MCF 10A (cell line): ENCODE measurements at regions of chr7 and their contacts with region 1.

Region 1: DNA sequence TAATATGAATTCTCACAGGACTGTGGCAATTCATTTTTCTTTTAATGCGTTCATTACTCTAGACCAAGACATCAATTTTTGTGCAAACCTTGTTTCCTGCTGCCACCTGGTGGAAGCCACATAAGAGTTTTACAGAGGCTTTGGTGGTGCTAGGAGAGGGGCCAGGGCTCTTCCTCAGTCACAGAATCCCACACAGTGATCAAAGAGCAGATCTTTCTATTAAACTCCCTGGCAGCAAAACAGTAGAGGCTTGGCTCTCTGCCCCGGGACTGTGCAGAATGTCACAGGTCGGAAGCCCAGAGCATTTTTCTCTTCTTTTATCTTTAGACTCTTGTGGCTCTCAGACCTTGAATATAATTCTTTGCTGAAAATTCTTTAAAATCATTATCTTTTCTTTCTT is 506.4 kb upstream of the C7orf33 start:
- DNase-seq: peak; percentile 63
- H3K4me3 Mint-ChIP-seq: no peak overlapping the region
- H3K27ac Mint-ChIP-seq: no peak overlapping the region
- H3K4me1 Mint-ChIP-seq: no peaks in the 10 kb centered on the region
- H3K27me3 Mint-ChIP-seq: peaks cover 81% of the 10 kb centered on the region
- CTCF ChIP-seq: peak; percentile 68

Region 2: GRCh38 chr7:146115851-146116520 is 1968.2 kb before region 1 on chr7:
- CTCF ChIA-PET with region 1: no interaction called
- POLR2A ChIA-PET with region 1: no interaction called
- intact Hi-C with region 1: loop called (anchors 10 kb)
- DNase-seq: no peak
- H3K4me3 Mint-ChIP-seq: no peak overlapping the region
- H3K27ac Mint-ChIP-seq: no peak overlapping the region
- H3K4me1 Mint-ChIP-seq: no peaks in the 10 kb centered on the region
- H3K27me3 Mint-ChIP-seq: peaks cover 42% of the 10 kb centered on the region
- CTCF ChIP-seq: no peak

Region 3: DNA sequence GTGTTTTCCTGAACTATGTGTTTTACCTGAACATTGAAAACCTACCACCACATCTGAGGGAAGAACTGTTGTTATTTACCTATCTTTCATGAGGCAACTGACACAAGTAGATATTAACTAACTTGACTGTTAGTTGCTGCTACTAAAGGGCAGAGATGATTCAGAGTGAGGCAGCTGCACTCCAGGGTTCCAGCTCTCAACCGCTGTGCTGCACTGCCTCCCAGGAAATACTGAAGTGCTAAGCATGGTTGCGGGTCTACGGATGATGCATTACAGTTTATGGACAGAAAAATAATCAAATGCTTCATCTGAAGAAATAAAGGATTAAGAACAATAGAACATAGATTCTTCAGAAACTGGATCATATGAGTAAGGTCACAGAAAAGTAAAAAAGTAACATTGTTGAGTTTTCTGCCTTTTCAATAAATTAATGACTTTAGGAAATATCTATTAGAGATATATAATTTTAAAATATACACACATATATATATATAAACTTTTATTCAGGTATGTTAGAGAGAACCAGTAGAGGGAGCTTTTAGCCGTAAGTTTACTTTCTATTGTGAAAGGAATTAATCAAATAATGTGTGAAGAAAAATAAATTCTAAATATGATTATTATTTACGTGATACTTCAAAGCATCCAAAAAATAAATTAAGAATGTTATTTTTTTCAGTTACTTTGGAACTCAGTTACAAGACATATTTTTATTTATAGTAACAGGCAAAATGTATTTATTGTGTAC is 1347.5 kb before region 1 on chr7:
- CTCF ChIA-PET with region 1: interaction called, 3 read pairs
- POLR2A ChIA-PET with region 1: no interaction called
- intact Hi-C with region 1: loop called (anchors 1 kb)
- DNase-seq: peak; percentile 22
- H3K4me3 Mint-ChIP-seq: no peak overlapping the region
- H3K27ac Mint-ChIP-seq: no peak overlapping the region
- H3K4me1 Mint-ChIP-seq: no peaks in the 10 kb centered on the region
- H3K27me3 Mint-ChIP-seq: peaks cover 45% of the 10 kb centered on the region
- CTCF ChIP-seq: peak; percentile 27

Region 4: DNA sequence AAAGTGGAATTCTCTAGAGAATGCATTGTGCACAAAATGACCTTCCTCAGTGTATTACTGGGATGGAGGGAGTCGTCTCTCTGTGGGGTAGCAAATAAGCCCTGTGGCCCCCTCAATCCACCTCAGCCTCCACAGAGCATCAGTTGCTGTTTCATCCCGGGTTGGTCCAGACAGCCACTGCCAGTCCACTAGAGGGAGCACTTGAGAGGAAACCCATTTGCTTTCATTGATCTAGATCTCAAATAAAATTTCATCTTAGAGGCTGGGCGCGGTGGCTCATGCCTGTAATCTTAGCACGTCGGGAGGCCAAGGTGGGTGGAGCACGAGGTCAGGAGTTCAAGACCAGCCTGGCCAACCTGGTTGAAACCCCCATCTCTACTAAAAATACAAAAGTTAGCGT is 838.8 kb before region 1 on chr7:
- CTCF ChIA-PET with region 1: interaction called, 5 read pairs
- POLR2A ChIA-PET with region 1: no interaction called
- intact Hi-C with region 1: loop called (anchors 1 kb)
- DNase-seq: peak; percentile 62
- H3K4me3 Mint-ChIP-seq: no peak overlapping the region
- H3K27ac Mint-ChIP-seq: no peak overlapping the region
- H3K4me1 Mint-ChIP-seq: no peaks in the 10 kb centered on the region
- H3K27me3 Mint-ChIP-seq: peaks cover 58% of the 10 kb centered on the region
- CTCF ChIP-seq: peak; percentile 70

Region 5: GRCh38 chr7:147432079-147432478 is 652.1 kb before region 1 on chr7:
- CTCF ChIA-PET with region 1: no interaction called
- POLR2A ChIA-PET with region 1: no interaction called
- intact Hi-C with region 1: loop called (anchors 10 kb)
- DNase-seq: peak; percentile 14
- H3K4me3 Mint-ChIP-seq: no peak overlapping the region
- H3K27ac Mint-ChIP-seq: no peak overlapping the region
- H3K4me1 Mint-ChIP-seq: no peaks in the 10 kb centered on the region
- H3K27me3 Mint-ChIP-seq: no peaks in the 10 kb centered on the region
- CTCF ChIP-seq: no peak

Region 6: GRCh38 chr7:147547249-147547897 is 536.8 kb before region 1 on chr7:
- CTCF ChIA-PET with region 1: interaction called, 6 read pairs
- POLR2A ChIA-PET with region 1: no interaction called
- intact Hi-C with region 1: loop called (anchors 2 kb)
- DNase-seq: peak; percentile 49
- H3K4me3 Mint-ChIP-seq: no peak overlapping the region
- H3K27ac Mint-ChIP-seq: no peak overlapping the region
- H3K4me1 Mint-ChIP-seq: no peaks in the 10 kb centered on the region
- H3K27me3 Mint-ChIP-seq: peaks cover 5% of the 10 kb centered on the region
- CTCF ChIP-seq: peak; percentile 25

Region 7: DNA sequence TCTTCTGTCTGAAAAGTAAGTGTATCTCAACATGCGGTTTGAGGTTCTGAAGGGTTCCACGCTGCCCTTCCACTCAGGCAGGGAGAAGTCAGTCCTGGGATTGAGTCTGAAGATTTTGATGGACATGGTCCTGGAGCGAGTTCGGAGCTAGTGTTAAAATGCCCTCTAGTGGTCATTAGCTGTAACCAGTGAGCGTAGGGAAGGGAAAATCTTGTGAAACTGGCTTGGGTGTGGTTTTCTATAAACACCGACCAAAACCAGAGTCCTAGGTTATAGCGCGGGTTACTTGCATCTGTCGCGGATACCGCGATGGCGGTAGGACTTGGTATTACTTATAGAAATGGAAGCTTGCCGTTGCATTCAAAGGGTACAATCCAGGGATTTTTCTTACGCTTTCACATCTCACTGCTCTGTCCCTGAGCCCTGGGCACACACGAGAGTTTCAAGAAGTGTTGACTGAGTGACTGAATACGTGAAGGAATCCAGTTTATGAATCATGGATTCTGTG is 158.2 kb after region 1 on chr7:
- CTCF ChIA-PET with region 1: interaction called, 4 read pairs
- POLR2A ChIA-PET with region 1: no interaction called
- intact Hi-C with region 1: loop called (anchors 2 kb)
- DNase-seq: peak; percentile 76
- H3K4me3 Mint-ChIP-seq: no peak overlapping the region
- H3K27ac Mint-ChIP-seq: no peak overlapping the region
- H3K4me1 Mint-ChIP-seq: no peaks in the 10 kb centered on the region
- H3K27me3 Mint-ChIP-seq: peaks cover 89% of the 10 kb centered on the region
- CTCF ChIP-seq: peak; percentile 58